Activated naive CD4-positive, alpha-beta T cell treated with anti-CD3 and anti-CD28 coated beads for 36 hours (primary cell): ENCODE measurements at regions of chr6 and their contacts with region 1.

Region 1: DNA sequence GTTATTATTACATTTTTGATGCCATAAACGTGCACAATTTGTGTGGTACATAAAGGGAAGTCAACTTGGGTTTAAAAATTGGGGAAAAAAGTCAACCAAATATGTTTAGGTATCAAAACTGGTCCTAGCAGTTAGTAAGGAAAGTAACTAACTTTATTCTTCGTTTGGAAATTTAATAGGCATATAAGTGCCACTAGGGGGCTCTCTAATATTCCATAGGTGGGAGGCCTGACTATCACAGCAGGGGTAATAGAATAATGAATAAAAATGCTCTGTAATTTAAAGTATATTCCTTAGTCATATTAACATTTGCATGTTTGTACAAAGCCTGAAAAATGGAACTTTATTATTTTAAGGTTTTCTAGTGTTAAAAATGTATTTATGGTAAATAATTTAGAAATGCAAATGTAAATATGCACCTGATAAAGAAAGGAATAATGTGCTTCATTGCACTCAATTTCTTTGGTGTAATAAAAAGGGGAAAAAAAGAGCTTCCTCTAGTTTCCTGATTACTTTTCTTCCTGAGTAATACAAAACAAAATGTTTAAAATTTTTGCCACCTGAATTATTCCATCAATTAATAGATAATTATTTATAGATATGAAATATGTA is 125.7 kb upstream of the HDAC2 start:
- DNase-seq: peak; percentile 12
- H3K4me3 Mint-ChIP-seq: no peak overlapping the region
- H3K27ac Mint-ChIP-seq: no peak overlapping the region
- H3K4me1 Mint-ChIP-seq: no peaks in the 10 kb centered on the region
- H3K27me3 Mint-ChIP-seq: peaks cover 7% of the 10 kb centered on the region

Region 2: DNA sequence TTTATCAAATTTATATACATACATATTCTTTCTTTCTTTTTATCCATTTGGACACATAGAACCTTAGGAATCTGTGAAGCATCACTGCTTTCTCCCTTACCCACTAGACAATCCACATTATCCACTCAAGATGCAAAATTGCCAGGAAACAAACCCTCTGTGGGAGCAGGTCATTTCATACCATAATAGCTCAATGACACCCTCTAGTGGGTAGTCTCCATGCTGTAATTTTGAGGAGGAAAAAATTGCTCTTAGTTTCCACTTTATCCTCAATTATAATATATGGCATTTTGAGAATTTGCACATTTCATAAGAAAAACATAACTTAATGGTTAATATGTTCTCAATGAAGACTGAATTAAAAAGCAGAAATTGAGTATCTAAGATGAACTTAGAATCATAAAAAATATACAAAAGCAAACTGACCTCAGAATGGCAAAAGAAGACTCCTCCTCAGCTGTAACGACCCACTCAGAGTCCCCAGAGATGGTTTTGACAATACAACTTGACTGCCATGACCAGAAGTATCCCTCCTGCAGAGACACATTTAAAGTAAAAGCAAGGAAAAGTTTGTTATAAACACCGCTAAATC is 1800.0 kb after region 1 on chr6:
- CTCF ChIA-PET with region 1: no interaction called
- intact Hi-C with region 1: loop called (anchors 2 kb)
- DNase-seq: no peak
- H3K4me3 Mint-ChIP-seq: no peak overlapping the region
- H3K27ac Mint-ChIP-seq: no peak overlapping the region
- H3K4me1 Mint-ChIP-seq: no peaks in the 10 kb centered on the region
- H3K27me3 Mint-ChIP-seq: peaks cover 9% of the 10 kb centered on the region